PC-9 (cell line): ENCODE measurements at regions of chr12 and their contacts with region 1.

Region 1: DNA sequence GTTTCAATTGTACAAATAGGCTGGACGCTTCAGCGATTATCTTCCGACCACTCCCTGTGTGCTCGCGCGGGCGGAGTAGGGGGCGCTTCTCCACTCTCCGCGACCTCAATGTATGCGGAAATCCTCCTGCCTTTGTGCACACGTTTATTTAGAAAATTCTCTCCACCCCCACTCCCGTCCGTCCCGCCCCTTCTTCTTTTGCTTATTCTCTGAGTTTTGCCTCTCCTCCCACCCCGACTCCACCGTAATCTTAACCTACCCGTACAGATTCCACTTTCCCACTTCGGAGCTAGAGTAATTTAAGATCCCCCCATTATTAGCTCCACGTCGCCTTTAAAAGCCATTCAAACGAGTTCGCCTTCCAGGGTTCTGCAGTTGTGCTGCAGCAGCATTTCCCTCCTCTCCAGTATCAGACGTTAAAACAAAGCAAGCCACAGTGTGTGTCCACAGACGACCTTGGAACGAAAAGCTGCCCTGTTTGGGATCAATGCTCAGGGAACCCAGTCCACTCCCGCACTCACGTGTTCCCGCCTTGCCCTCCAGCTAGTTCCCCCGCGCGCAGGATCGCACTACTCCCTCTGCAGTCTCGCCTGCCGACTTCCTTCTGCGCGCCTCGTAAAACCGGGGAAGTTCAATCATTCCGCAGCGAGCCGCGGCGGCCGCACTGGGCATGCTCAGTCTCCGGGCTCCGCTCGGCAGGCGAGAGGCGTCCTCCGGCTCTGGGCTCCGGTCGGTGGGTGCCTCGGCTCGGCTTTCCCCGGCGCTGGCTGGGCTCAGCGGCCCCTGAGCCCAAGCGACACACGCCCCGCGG is at the start of gene ANO6:
- DNase-seq: peak; percentile 76 to 80
- H3K4me3 ChIP-seq: peak within 1 kb of the TSS; percentile 86
- H3K27ac ChIP-seq: peak within 1 kb of the TSS; percentile 93
- H3K4me1 ChIP-seq: peaks cover 38% of the 10 kb centered on the region
- H3K27me3 ChIP-seq: no peaks in the 10 kb centered on the region
- CTCF ChIP-seq: peak; percentile 55
- total RNA-seq, gene ANO6: 46.1 and 51.4 TPM in 2 replicates

Region 2: DNA sequence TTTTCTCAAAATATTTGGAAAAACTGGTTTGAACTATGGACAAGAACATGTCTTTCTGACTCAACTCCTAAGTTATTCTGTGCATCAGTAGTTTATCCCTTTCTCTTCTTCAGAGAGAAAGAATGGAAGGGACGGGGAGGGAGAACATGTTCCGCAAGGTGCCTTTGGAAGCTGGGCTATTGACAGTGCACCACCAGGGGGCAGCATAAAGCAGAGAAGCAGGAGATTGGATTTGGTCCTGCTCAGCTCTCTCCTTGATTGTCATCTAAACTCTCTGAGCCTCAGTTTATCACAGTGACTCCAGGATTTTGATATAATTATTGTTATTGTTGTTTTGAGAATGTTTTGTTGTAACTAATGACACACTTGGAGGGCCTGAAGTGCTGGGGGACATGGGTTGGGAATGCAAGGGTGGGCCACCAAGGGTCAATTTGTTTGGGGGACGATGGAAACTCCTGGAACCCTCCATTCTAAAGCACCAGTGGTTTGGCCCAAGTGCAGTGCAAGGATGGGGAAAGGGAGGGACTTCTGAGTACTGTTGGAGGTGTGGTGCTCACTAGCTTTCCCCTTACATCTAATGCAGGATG is 45.1 kb before region 1 on chr12:
- CTCF ChIA-PET with region 1: no interaction called
- POLR2A ChIA-PET with region 1: no interaction called
- intact Hi-C with region 1: loop called (anchors 2 kb)
- DNase-seq: peak; percentile 36 to 69
- H3K4me3 ChIP-seq: no peak overlapping the region
- H3K27ac ChIP-seq: no peak overlapping the region
- H3K4me1 ChIP-seq: no peaks in the 10 kb centered on the region
- H3K27me3 ChIP-seq: no peaks in the 10 kb centered on the region
- CTCF ChIP-seq: peak; percentile 92

Region 3: DNA sequence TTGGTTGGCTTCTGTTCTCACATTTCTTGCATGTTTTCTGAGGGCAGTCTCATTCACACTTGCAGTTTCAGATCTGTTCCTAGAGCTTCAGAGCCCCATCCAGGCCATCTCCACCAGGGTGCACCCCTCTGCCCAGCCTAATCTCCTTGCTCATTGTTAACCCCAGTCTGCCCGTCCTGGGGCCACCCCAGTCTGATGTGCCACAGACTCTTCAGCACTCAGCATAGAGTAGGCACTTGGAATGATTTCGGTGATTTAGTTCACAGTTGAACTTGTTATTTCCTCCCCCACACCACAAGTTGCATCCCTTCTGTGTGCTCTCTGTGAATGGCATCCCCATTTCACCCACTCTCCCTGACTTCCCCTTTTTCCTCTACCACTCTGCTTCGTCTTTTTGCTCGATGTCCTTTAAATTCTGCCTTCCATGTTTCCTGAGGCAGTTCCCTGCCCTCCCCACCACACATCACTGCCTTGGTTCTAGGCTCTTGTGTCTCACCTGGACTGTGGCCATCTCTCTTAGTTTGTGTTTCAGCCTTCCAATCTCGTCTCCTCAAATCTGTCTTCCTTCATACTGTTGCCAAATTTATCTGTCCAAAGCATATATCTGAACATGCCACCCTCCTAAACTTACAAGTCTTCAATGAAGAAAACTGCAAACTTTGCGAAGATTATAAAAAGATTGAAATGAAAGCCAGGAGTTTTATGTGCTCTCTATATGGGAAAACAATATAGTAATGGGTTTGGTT is 41.7 kb after region 1 on chr12:
- CTCF ChIA-PET with region 1: no interaction called
- POLR2A ChIA-PET with region 1: interaction called, 4 read pairs
- intact Hi-C with region 1: loop called (anchors 1 kb)
- DNase-seq: no peak
- H3K4me3 ChIP-seq: no peak overlapping the region
- H3K27ac ChIP-seq: peak overlapping the region; percentile 92; the same call in 1 of the 2 replicates
- H3K4me1 ChIP-seq: peaks cover 63% of the 10 kb centered on the region
- H3K27me3 ChIP-seq: no peaks in the 10 kb centered on the region
- CTCF ChIP-seq: no peak

Region 4: DNA sequence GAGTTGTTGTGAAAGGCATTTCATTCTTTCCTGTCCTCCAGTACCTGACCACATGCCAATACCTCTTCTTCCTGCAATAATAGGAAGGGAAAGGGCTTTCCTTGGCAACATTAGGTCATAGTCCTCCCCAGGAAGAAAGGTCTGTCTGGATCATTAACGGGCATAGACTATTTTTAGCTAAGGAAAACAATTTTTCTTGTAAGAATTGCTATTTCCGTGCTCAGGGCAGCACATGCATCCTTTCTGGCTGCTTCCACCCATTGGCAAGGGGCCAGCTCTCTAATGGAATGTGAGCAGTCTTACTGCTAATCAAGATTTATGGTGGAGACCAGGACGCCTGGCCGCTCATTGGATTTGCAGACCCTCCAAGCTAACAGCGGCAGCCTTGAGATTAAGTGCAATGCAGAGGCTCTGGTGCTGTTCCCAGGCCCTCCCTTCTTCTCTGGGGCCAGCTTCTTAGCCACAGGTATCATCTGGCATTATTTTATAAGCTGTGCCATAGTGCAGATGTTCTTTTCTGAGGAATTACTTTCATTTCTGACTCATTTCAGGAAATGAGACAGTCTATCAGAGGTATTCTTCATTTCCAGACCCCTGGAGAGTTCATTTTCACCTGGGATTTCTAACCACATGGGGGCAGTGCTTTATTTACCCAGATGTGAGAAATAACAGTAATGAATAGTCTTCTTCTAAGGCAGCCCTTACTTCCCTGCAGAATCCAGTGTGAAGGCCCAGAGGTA is 53.2 kb after region 1 on chr12:
- CTCF ChIA-PET with region 1: interaction called, 6 read pairs
- POLR2A ChIA-PET with region 1: interaction called, 4 read pairs
- intact Hi-C with region 1: loop called (anchors 2 kb)
- DNase-seq: peak; percentile 77 to 91
- H3K4me3 ChIP-seq: peak overlapping the region; percentile 30; the same call in 1 of the 2 replicates
- H3K27ac ChIP-seq: peak overlapping the region; percentile 94
- H3K4me1 ChIP-seq: peaks cover 67% of the 10 kb centered on the region
- H3K27me3 ChIP-seq: no peaks in the 10 kb centered on the region
- CTCF ChIP-seq: peak; percentile 70

Region 5: GRCh38 chr12:45284131-45284901 is 68.7 kb after region 1 on chr12:
- CTCF ChIA-PET with region 1: no interaction called
- POLR2A ChIA-PET with region 1: interaction called, 11 read pairs
- intact Hi-C with region 1: no loop called
- DNase-seq: peak; percentile 48 to 95
- H3K4me3 ChIP-seq: peak overlapping the region; percentile 38; the same call in 1 of the 2 replicates
- H3K27ac ChIP-seq: peak overlapping the region; percentile 90
- H3K4me1 ChIP-seq: peaks cover 48% of the 10 kb centered on the region
- H3K27me3 ChIP-seq: no peaks in the 10 kb centered on the region
- CTCF ChIP-seq: 0 out of 2 replicates have a peak, but pooled peaks have one; percentile 18

Region 6: GRCh38 chr12:45298716-45299692 is 83.4 kb after region 1 on chr12:
- CTCF ChIA-PET with region 1: no interaction called
- POLR2A ChIA-PET with region 1: no interaction called
- intact Hi-C with region 1: loop called (anchors 1 kb)
- DNase-seq: peak; percentile 52 to 93
- H3K4me3 ChIP-seq: peak overlapping the region; percentile 12; the same call in 1 of the 2 replicates
- H3K27ac ChIP-seq: peak overlapping the region; percentile 90
- H3K4me1 ChIP-seq: peaks cover 51% of the 10 kb centered on the region
- H3K27me3 ChIP-seq: no peaks in the 10 kb centered on the region
- CTCF ChIP-seq: no peak

Region 7: DNA sequence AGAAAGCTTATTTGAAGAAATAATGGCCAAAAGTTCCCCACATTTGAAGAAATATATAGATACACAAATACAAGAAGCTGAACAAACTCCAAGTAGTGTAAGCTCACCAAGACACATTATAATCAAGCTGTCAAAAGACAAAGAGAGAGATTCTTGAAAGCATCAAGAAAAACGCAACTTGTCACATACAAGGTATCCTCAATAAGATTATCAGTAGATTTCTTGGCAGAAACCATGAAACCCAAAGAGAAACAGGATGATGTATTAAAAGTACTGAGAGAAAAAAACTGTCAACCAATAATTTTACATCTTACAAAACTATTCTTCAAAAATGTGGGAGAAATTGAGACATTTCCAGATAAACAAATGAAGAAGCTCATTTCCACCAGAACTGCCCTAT is 263.3 kb after region 1 on chr12:
- CTCF ChIA-PET with region 1: no interaction called
- POLR2A ChIA-PET with region 1: interaction called, 10 read pairs
- intact Hi-C with region 1: no loop called
- DNase-seq: no peak
- H3K4me3 ChIP-seq: no peak overlapping the region
- H3K27ac ChIP-seq: no peak overlapping the region
- H3K4me1 ChIP-seq: no peaks in the 10 kb centered on the region
- H3K27me3 ChIP-seq: no peaks in the 10 kb centered on the region
- CTCF ChIP-seq: no peak